MCF 10A (cell line): ENCODE measurements at regions of chr4 and their contacts with region 1.

Region 1: GRCh38 chr4:172998527-172999469 is 169.8 kb upstream of the GALNT7 start:
- DNase-seq: peak; percentile 77
- H3K4me3 Mint-ChIP-seq: peak overlapping the region; percentile 15
- H3K27ac Mint-ChIP-seq: peak overlapping the region; percentile 60
- H3K4me1 Mint-ChIP-seq: peaks cover 52% of the 10 kb centered on the region
- H3K27me3 Mint-ChIP-seq: peaks cover 7% of the 10 kb centered on the region
- CTCF ChIP-seq: no peak

Region 2: DNA sequence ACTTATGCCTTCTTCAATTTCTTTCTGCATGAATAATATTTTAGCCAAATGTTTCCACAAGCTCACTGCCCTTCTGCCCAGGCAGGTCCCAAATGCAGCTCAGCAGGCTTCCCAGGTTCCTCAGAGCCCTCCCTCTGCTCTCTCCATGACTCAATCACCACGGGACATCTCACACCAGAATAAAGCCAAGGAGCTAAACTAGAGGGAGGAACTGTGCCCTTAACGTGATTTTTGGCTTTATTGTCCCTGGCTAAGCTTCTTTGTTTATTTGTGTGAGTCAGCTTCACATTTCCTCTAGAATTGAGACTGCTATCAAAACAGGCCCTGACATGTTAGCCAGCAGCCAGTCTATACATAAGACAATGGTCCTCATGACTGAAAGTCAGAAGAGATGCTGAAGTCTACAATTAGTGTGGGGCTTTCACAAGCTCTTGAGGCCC is 16.6 kb before region 1 on chr4:
- CTCF ChIA-PET with region 1: interaction called, 3 read pairs
- POLR2A ChIA-PET with region 1: interaction called, 19 read pairs
- intact Hi-C with region 1: no loop called
- DNase-seq: peak; percentile 97
- H3K4me3 Mint-ChIP-seq: peak overlapping the region; percentile 12
- H3K27ac Mint-ChIP-seq: peak overlapping the region; percentile 76
- H3K4me1 Mint-ChIP-seq: peaks cover 22% of the 10 kb centered on the region
- H3K27me3 Mint-ChIP-seq: no peaks in the 10 kb centered on the region
- CTCF ChIP-seq: no peak

Region 3: GRCh38 chr4:173057901-173058300 is 59.1 kb after region 1 on chr4:
- CTCF ChIA-PET with region 1: no interaction called
- POLR2A ChIA-PET with region 1: no interaction called
- intact Hi-C with region 1: no loop called
- DNase-seq: no peak
- H3K4me3 Mint-ChIP-seq: no peak overlapping the region
- H3K27ac Mint-ChIP-seq: no peak overlapping the region
- H3K4me1 Mint-ChIP-seq: peaks cover 7% of the 10 kb centered on the region
- H3K27me3 Mint-ChIP-seq: no peaks in the 10 kb centered on the region
- CTCF ChIP-seq: no peak

Region 4: DNA sequence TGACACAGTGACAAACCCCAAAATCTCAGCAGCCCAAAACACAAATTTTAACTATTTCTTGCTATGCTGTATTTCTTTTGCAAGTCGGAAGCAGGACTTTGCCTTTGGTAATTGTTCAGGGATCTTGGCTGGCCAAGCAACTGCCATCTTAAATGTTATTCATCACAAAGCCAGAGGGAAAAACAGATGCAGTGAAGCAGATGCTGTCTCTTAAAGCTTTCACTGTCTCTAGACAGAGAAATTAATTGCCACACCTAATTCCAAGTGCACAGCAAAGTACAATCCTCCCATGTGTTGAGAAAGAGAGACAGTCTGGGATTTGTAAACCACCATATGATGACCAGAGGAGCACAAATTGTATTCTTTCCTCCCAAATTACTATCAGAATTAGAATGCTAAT is 139.8 kb after region 1 on chr4:
- CTCF ChIA-PET with region 1: no interaction called
- POLR2A ChIA-PET with region 1: no interaction called
- intact Hi-C with region 1: no loop called
- DNase-seq: no peak
- H3K4me3 Mint-ChIP-seq: no peak overlapping the region
- H3K27ac Mint-ChIP-seq: no peak overlapping the region
- H3K4me1 Mint-ChIP-seq: peaks cover 5% of the 10 kb centered on the region
- H3K27me3 Mint-ChIP-seq: no peaks in the 10 kb centered on the region
- CTCF ChIP-seq: no peak